Calu3 (cell line): ENCODE measurements at regions of chr19 and their contacts with region 1.

Region 1: DNA sequence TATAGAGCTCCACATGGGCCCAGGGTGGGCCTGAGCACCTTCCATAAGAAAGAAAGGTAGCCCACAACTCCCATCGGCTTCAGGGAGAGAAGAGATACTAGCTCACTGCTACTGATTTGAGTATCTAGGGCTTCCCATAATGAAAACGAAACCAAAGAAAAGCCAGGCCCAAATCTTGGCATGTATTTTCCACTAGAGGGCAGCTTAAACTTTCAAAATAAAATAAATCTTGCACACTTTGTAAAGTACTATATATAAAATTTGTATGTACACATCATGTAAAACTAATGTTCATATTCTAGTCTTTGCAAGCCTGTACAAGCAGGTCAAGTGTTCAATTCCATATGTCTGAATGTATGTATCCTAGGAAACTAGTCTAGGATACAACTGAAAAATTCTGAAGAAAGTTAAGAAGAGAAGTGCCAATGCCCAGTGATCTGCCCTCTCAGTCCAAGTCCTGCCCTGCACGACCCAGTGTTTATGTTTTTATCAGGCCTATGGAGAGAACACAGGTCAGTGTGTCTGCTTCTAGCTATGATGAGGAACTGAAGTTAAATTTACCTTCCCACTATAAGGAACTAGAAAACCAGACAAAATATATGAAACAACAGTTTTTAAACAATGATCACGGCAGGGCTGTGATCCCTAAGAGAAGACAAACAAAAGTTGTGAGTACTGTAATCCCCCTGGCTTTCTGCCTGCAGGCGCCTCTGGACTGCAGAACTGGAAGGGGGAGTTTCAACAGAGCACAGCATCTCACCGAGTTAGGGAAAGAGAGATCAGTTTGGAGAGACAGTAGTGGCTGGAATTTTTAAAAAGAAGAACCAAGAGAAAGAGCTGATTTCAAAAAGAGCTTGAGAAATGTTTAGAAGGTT is 475.7 kb downstream of the UQCRFS1 start:
- DNase-seq: peak; percentile 7
- H3K4me3 Mint-ChIP-seq: no peak overlapping the region
- H3K27ac Mint-ChIP-seq: peak overlapping the region; percentile 30
- H3K4me1 Mint-ChIP-seq: peaks cover 17% of the 10 kb centered on the region
- H3K27me3 Mint-ChIP-seq: no peaks in the 10 kb centered on the region
- CTCF ChIP-seq: peak; percentile 42

Region 2: GRCh38 chr19:28862238-28862637 is 125.0 kb after region 1 on chr19:
- CTCF ChIA-PET with region 1: no interaction called
- intact Hi-C with region 1: loop called (anchors 5 kb)
- DNase-seq: no peak
- H3K4me3 Mint-ChIP-seq: no peak overlapping the region
- H3K27ac Mint-ChIP-seq: no peak overlapping the region
- H3K4me1 Mint-ChIP-seq: peaks cover 18% of the 10 kb centered on the region
- H3K27me3 Mint-ChIP-seq: no peaks in the 10 kb centered on the region
- CTCF ChIP-seq: no peak

Region 3: GRCh38 chr19:28878862-28879566 is 141.8 kb after region 1 on chr19:
- CTCF ChIA-PET with region 1: interaction called, 38 read pairs
- intact Hi-C with region 1: loop called (anchors 1 kb)
- DNase-seq: peak; percentile 74
- H3K4me3 Mint-ChIP-seq: no peak overlapping the region
- H3K27ac Mint-ChIP-seq: no peak overlapping the region
- H3K4me1 Mint-ChIP-seq: peaks cover 10% of the 10 kb centered on the region
- H3K27me3 Mint-ChIP-seq: no peaks in the 10 kb centered on the region
- CTCF ChIP-seq: peak; percentile 74

Region 4: GRCh38 chr19:28960986-28961705 is 223.9 kb after region 1 on chr19:
- CTCF ChIA-PET with region 1: interaction called, 4 read pairs
- intact Hi-C with region 1: loop called (anchors 5 kb)
- DNase-seq: peak; percentile 70
- H3K4me3 Mint-ChIP-seq: peak overlapping the region; percentile 55
- H3K27ac Mint-ChIP-seq: peak overlapping the region; percentile 99
- H3K4me1 Mint-ChIP-seq: peaks cover 38% of the 10 kb centered on the region
- H3K27me3 Mint-ChIP-seq: no peaks in the 10 kb centered on the region
- CTCF ChIP-seq: no peak

Region 5: DNA sequence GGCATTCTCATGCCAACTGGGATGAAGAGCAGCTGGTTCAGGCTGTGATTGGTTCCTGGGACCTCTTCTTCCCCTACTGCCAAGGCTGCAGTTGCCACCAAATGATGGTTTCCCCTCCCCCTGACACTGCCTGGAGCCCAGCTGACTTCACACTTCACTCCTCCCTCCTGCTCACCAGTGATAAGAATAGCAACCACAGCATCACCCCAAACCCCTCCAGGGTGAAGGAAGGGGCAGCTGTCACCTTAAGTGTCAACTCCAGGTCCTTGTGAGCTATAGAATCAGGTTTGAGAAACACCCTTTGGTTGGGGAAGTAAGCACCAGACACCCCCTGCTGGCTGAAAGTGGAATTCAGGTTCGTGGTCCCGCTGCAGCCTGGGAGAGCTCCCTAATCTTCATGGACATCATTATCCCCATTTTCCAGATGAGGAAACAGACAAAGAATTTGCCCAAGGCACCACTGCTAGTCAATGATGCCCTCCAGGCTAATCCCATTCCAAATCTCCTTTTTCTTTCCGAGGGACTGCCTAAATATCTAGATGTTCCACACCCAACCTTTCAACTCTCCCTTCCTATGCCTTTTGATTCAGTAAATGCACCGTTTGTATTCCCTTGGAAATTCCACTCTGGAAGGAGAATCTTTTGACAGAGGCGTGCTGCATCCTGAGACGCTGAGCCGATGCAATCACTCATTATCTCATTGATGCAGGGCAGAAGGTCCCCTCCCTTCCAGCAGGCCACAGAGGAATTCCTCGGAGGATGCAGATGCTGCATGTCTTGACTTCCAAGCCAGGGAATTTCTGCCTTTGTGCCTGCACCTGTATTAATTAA is 526.3 kb after region 1 on chr19:
- CTCF ChIA-PET with region 1: interaction called, 11 read pairs
- intact Hi-C with region 1: loop called (anchors 1 kb)
- DNase-seq: peak; percentile 73
- H3K4me3 Mint-ChIP-seq: no peak overlapping the region
- H3K27ac Mint-ChIP-seq: no peak overlapping the region
- H3K4me1 Mint-ChIP-seq: peaks cover 6% of the 10 kb centered on the region
- H3K27me3 Mint-ChIP-seq: peaks cover 47% of the 10 kb centered on the region
- CTCF ChIP-seq: peak; percentile 79

Region 6: DNA sequence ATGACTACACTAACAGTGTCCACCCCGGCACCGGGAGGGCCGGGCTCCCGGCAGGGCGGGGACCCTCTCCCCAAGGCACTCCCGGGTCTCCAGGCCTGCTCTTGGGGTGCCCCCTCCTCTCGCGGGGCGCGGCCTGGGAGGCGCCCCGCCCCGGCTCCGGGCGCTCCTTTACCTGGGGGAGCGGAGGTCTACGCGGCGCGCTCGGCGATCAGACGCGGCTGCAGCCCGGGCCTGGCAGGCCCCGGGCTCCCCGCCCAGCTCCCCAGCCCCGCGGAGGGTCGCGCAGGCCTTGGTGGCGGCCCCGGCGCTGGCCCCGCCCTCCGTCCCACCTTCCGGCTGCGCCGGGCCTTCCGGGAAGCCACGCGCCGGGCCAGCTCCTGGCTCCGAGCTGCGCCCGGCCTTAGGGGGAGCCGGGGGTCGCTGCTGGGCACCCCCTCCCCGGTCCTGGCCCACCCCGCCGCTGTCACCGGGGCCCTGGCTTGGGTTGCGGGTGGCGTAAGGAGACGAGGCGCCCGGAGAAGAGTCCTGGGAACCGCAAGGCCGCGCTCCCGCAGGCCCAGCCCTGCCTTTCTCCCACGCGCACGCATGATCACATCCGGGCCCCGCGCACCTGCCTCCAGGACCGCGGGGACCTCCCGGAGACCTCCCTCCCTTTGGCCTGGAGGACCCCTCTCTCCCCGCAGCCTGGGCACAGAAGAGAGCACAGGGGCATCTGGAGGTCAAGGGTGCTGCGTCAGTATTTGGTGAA is 977.9 kb after region 1 on chr19 and contains the start of gene C19orf12:
- CTCF ChIA-PET with region 1: no interaction called
- intact Hi-C with region 1: loop called (anchors 5 kb)
- DNase-seq: peak; percentile 76
- H3K4me3 Mint-ChIP-seq: peak within 1 kb of the TSS; percentile 88
- H3K27ac Mint-ChIP-seq: peak within 1 kb of the TSS; percentile 87
- H3K4me1 Mint-ChIP-seq: peaks cover 35% of the 10 kb centered on the region
- H3K27me3 Mint-ChIP-seq: no peaks in the 10 kb centered on the region
- CTCF ChIP-seq: no peak
- total RNA-seq, gene C19orf12: 15.4 and 17.5 TPM in 2 replicates